Caco-2 (cell line): ENCODE measurements at regions of chr3 and their contacts with region 1.

Region 1: GRCh38 chr3:186570096-186570940 is at the start of gene DNAJB11:
- DNase-seq: peak; percentile 98 to 99
- H3K4me3 ChIP-seq: peak within 1 kb of the TSS; percentile 84
- H3K4me3 Mint-ChIP-seq: peak within 1 kb of the TSS; percentile 100
- H3K27ac Mint-ChIP-seq: peak within 1 kb of the TSS; percentile 97
- H3K4me1 ChIP-seq: 0 out of 2 replicates have a peak, but pooled peaks cover 3% of the 10 kb centered on the region
- H3K4me1 Mint-ChIP-seq: peaks cover 25% of the 10 kb centered on the region
- H3K27me3 ChIP-seq: no peaks in the 10 kb centered on the region
- H3K27me3 Mint-ChIP-seq: no peaks in the 10 kb centered on the region
- CTCF ChIP-seq: peak in 1 of 2 experiments; percentile 1
- total RNA-seq, gene DNAJB11: 93.1 and 95.7 TPM in 2 replicates

Region 2: DNA sequence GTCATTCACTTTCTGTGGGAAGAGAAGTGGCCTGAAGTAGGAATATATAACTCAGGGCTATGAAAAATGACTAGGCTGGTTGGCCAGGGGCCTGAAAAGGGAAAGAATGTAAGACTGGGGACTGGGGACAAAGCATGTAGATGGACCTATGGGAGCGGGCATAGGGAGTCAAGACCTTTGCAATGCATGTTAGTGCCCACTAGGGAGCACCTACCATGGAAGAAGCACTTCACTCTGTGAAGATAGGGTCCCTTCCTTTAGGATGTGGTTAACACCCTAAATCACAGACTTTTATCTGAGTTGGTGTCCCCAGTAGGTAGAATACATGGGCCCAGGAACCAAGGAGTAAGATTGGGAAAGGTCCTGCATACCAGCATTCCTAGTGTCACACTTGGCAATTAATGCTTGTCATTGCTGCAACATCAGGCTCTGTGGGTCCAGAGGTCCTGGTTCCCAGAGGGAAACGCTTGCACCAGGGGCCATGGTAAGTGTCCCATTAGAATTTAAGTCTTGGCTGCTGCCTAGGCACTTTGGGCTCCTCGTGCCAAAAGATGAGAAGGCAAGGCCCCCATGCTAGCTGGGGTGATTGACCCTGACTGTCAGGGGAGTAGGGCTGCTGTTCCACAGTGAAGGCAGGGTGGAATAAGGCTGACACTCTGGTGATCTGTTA is 105.8 kb before region 1 on chr3:
- CTCF ChIA-PET with region 1: no interaction called
- POLR2A ChIA-PET with region 1: no interaction called
- intact Hi-C with region 1: no loop called
- DNase-seq: no peak
- H3K4me3 ChIP-seq: no peak overlapping the region
- H3K4me3 Mint-ChIP-seq: no peak overlapping the region
- H3K27ac Mint-ChIP-seq: no peak overlapping the region
- H3K4me1 ChIP-seq: peaks cover 8% of the 10 kb centered on the region; the same call in 1 of the 2 replicates
- H3K4me1 Mint-ChIP-seq: peaks cover 22% of the 10 kb centered on the region
- H3K27me3 ChIP-seq: no peaks in the 10 kb centered on the region
- H3K27me3 Mint-ChIP-seq: peaks cover 4% of the 10 kb centered on the region
- CTCF ChIP-seq: peak in 1 of 2 experiments; percentile 25

Region 3: DNA sequence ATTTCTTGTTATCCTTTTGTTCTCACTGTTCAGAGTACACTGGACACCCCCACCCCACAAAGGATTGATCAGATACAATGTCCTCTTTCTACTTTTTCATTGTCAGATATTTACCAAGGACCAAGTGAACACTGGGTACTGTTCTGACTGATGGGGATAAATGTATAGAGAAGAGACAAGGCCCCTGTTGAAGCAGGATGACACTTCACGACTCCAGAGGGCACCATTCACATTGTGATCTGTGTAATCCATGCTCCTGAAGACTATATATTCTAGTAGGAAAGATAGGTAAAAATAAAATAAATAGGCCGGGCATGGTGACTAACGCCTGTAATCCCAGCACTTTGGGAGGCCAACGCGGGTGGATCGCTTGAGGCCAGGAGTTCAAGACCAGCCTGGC is 18.9 kb before region 1 on chr3:
- CTCF ChIA-PET with region 1: interaction called, 3 read pairs
- POLR2A ChIA-PET with region 1: no interaction called
- intact Hi-C with region 1: loop called (anchors 1 kb)
- DNase-seq: no peak
- H3K4me3 ChIP-seq: no peak overlapping the region
- H3K4me3 Mint-ChIP-seq: no peak overlapping the region
- H3K27ac Mint-ChIP-seq: no peak overlapping the region
- H3K4me1 ChIP-seq: no peaks in the 10 kb centered on the region
- H3K4me1 Mint-ChIP-seq: no peaks in the 10 kb centered on the region
- H3K27me3 ChIP-seq: no peaks in the 10 kb centered on the region
- H3K27me3 Mint-ChIP-seq: no peaks in the 10 kb centered on the region
- CTCF ChIP-seq: peak in 1 of 2 experiments; percentile 16

Region 4: GRCh38 chr3:186589121-186589520 is 18.8 kb after region 1 on chr3:
- CTCF ChIA-PET with region 1: no interaction called
- POLR2A ChIA-PET with region 1: interaction called, 10 read pairs
- intact Hi-C with region 1: loop called (anchors 2 kb)
- DNase-seq: peak in 1 of 2 experiments; percentile 43
- H3K4me3 ChIP-seq: no peak overlapping the region
- H3K4me3 Mint-ChIP-seq: no peak overlapping the region
- H3K27ac Mint-ChIP-seq: peak overlapping the region; percentile 71
- H3K4me1 ChIP-seq: peaks cover 54% of the 10 kb centered on the region
- H3K4me1 Mint-ChIP-seq: peaks cover 19% of the 10 kb centered on the region
- H3K27me3 ChIP-seq: no peaks in the 10 kb centered on the region
- H3K27me3 Mint-ChIP-seq: no peaks in the 10 kb centered on the region
- CTCF ChIP-seq: peak; percentile 40 to 56

Region 5: DNA sequence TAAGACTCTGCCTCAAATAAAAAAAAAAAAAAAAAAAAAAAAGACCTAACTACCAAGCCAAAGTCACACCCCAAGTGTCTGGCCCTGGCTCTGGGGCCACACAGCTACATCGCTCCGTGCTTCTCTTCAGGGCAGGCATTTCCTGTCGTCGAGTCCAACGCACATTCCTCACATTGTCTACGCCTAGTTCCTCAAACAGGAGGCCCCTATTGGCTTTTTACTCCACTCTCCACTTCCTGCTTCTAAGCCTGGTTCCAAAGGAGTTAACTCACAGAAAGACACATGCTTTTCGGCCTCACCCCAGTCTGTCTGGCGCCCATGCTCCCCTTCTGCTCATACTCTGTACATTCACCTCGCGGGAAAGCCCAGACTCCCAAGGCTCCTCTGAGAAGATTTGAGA is 175.7 kb after region 1 on chr3:
- CTCF ChIA-PET with region 1: no interaction called
- POLR2A ChIA-PET with region 1: interaction called, 10 read pairs
- intact Hi-C with region 1: loop called (anchors 1 kb)
- DNase-seq: peak; percentile 88 to 93
- H3K4me3 ChIP-seq: no peak overlapping the region
- H3K4me3 Mint-ChIP-seq: peak overlapping the region; percentile 62
- H3K27ac Mint-ChIP-seq: peak overlapping the region; percentile 95
- H3K4me1 ChIP-seq: peaks cover 50% of the 10 kb centered on the region
- H3K4me1 Mint-ChIP-seq: peaks cover 44% of the 10 kb centered on the region
- H3K27me3 ChIP-seq: no peaks in the 10 kb centered on the region
- H3K27me3 Mint-ChIP-seq: no peaks in the 10 kb centered on the region
- CTCF ChIP-seq: no peak

Region 6: GRCh38 chr3:186754006-186754405 is 183.7 kb after region 1 on chr3:
- CTCF ChIA-PET with region 1: no interaction called
- POLR2A ChIA-PET with region 1: interaction called, 5 read pairs
- intact Hi-C with region 1: loop called (anchors 1 kb)
- DNase-seq: no peak
- H3K4me3 ChIP-seq: no peak overlapping the region
- H3K4me3 Mint-ChIP-seq: no peak overlapping the region
- H3K27ac Mint-ChIP-seq: no peak overlapping the region
- H3K4me1 ChIP-seq: peaks cover 6% of the 10 kb centered on the region; the same call in 1 of the 2 replicates
- H3K4me1 Mint-ChIP-seq: no peaks in the 10 kb centered on the region
- H3K27me3 ChIP-seq: no peaks in the 10 kb centered on the region
- H3K27me3 Mint-ChIP-seq: no peaks in the 10 kb centered on the region
- CTCF ChIP-seq: no peak

Region 7: DNA sequence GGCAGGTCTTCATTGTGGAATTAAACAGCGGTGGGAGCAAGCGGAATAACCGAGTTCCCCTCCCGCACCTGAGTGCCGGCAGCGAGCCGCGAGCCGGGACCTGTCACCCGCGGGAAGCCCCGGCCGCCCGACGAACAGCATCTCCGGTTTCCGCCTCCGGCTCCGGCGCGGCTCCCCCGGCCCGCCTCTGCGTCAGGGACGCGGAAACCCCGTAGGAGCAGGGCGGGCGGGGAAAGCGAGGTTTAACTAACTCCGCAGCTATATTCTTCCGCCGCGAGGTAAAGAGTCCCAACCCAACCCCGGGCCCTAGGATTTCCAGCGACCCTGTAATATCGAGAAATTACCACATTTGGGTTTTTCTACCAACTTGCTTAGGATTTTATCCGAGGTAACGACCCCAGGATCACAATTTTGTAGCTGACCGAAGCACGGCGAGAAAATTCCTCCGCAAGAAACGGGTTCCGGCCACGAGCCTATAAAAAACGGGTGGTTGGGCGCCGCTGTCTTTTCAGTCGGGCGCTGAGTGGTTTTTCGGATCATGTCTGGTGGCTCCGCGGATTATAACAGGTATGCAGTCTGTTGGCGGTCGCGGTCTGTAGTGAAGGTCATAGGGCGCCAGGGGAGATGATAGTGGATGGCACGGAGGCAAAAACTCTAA is 212.9 kb after region 1 on chr3 and contains the start of gene EIF4A2:
- CTCF ChIA-PET with region 1: no interaction called
- POLR2A ChIA-PET with region 1: interaction called, 17 read pairs
- intact Hi-C with region 1: no loop called
- DNase-seq: peak; percentile 85 to 93
- H3K4me3 ChIP-seq: peak within 1 kb of the TSS; percentile 88
- H3K4me3 Mint-ChIP-seq: peak within 1 kb of the TSS; percentile 80
- H3K27ac Mint-ChIP-seq: peak within 1 kb of the TSS; percentile 95
- H3K4me1 ChIP-seq: peaks cover 13% of the 10 kb centered on the region; the same call in 1 of the 2 replicates
- H3K4me1 Mint-ChIP-seq: peaks cover 16% of the 10 kb centered on the region
- H3K27me3 ChIP-seq: no peaks in the 10 kb centered on the region
- H3K27me3 Mint-ChIP-seq: no peaks in the 10 kb centered on the region
- CTCF ChIP-seq: no peak
- total RNA-seq, gene EIF4A2: 346 and 359 TPM in 2 replicates